Vagina (tissue), 2 donors: ENCODE measurements at regions of chr17 and their contacts with region 1.

Region 1: DNA sequence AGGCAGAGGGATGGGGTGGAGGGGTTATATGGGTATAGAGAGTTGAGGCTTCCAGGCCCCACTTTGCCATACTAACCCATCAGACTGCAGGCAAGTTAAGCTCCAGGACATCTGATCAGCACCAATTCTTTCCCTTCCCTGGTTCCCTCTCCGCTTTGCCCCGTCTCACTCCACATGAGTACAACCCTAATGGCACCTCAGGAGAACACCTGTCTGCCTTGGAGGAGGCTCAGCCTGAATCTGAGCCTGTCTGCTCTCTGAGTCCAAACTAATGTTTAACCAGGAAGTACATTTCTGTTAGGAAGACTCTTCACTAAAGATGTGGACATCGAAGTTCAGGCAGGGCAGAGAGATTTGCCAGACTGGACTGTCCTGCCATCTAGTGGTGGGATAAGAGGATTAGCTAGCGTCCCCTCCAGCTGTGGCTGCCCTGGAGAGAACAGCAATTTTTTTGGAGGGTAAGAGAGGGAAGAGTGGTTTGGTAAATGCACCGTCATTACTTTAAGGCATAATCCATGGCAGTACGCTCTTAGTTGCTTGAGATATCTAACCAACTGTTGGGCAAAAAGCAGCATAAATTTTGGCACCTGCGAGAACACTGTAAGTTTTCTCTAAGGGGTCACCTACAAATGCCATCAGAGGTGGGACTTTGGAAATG is 29.2 kb upstream of the LRRC75A start:
- DNase-seq: no peak
- H3K4me3 ChIP-seq: no peak overlapping the region
- H3K27ac ChIP-seq: peak overlapping the region; percentile 12
- H3K4me1 ChIP-seq: no peaks in the 10 kb centered on the region
- H3K27me3 ChIP-seq: no peaks in the 10 kb centered on the region
- CTCF ChIP-seq: peak; percentile 92 to 97 (median 95)
- POLR2A ChIP-seq: no peak

Region 2: DNA sequence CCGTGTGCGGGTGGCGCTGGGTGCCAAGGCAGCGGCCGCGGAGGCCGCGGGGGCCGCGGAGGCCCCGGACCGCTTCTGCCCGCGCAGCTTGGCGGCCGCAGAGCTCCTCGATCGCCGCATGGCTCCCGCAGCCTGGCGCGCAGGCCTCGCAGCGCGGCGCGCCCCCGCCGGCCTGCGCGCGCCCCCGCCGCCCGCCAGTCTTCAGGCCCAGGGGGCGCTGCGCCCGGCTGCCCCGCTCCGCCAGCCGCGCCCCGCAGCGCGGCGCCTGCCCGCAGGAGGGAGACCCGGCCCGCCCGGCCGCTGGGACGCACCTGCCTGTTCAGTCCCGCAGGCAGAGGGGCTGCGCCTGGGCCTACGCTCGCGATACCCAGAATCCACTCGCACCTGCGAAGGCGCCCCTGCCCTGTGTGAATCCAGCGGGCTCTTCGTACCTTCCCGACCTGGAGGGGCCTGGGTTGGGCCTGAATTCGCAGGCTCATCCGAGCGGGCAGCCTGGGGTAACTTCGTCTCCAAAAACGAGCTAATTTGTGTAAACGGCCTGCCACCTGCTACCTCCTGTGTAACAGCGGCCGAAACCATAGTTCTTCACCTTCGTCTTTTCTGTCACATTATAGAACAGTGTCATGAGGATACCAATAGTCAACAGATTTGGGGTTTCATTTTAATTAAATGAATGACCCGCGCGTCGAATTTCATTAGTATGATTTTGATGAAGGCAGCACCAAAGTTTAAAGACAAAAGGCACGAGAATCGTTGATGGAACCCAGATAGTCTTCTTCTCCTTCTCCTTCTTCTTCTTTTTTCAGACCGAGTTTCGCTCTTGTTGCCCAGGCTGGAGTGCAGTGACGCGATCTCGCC is 167.7 kb before region 1 on chr17 and contains the start of gene CENPV:
- intact Hi-C with region 1: no loop called
- DNase-seq: no peak
- H3K4me3 ChIP-seq: peak within 1 kb of the TSS; percentile 63 to 68
- H3K27ac ChIP-seq: peak within 1 kb of the TSS; percentile 66
- H3K4me1 ChIP-seq: peaks cover 18% of the 10 kb centered on the region
- H3K27me3 ChIP-seq: no peaks in the 10 kb centered on the region
- CTCF ChIP-seq: no peak
- POLR2A ChIP-seq: peak in 1 of 2 donors; percentile 2
- total RNA-seq, gene CENPV: 4.2 TPM

Region 3: GRCh38 chr17:16455997-16456741 is 65.0 kb before region 1 on chr17:
- intact Hi-C with region 1: loop called (anchors 2 kb)
- DNase-seq: no peak
- H3K4me3 ChIP-seq: no peak overlapping the region
- H3K27ac ChIP-seq: no peak overlapping the region
- H3K4me1 ChIP-seq: peaks cover 9% of the 10 kb centered on the region
- H3K27me3 ChIP-seq: no peaks in the 10 kb centered on the region
- CTCF ChIP-seq: no peak
- POLR2A ChIP-seq: no peak